CD8-positive, alpha-beta T cell (primary cell): ENCODE measurements at regions of chr4 and their contacts with region 1.

Region 1: GRCh38 chr4:87251106-87251505 is 30.7 kb upstream of the KLHL8 start:
- DNase-seq: no peak
- ATAC-seq: no peak
- H3K4me3 ChIP-seq: no peak overlapping the region
- H3K4me3 Mint-ChIP-seq: no peak overlapping the region
- H3K27ac ChIP-seq: no peak overlapping the region
- H3K27ac Mint-ChIP-seq: no peak overlapping the region
- H3K4me1 ChIP-seq: no peaks in the 10 kb centered on the region
- H3K4me1 Mint-ChIP-seq: no peaks in the 10 kb centered on the region
- H3K27me3 ChIP-seq: no peaks in the 10 kb centered on the region
- H3K27me3 Mint-ChIP-seq: no peaks in the 10 kb centered on the region
- CTCF ChIP-seq: no peak

Region 2: DNA sequence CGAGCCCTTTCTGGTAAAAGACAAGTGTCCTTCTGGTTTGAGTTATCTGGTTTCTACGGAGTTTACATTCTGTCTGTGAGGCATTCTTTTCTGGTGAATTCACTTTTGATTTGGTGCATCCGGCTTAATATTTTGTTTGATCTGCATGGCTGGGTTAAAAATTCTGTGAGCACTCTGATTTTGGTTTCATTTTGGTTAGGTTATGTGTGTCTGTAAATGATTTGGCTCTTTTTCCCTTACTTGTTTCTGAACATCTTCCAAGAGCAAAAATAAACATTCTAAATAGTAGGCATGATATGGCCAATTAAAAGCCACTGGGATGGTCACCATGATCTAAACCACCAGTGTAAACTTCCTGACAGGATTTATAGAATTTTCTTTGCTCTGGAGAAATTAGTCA is 742.7 kb before region 1 on chr4:
- CTCF ChIA-PET with region 1: no interaction called
- POLR2A ChIA-PET with region 1: no interaction called
- intact Hi-C with region 1: loop called in 1 of 2 experiments (anchors 10 kb)
- DNase-seq: no peak
- ATAC-seq: no peak
- H3K4me3 ChIP-seq: no peak overlapping the region
- H3K4me3 Mint-ChIP-seq: no peak overlapping the region
- H3K27ac ChIP-seq: no peak overlapping the region
- H3K27ac Mint-ChIP-seq: no peak overlapping the region
- H3K4me1 ChIP-seq: no peaks in the 10 kb centered on the region
- H3K4me1 Mint-ChIP-seq: no peaks in the 10 kb centered on the region
- H3K27me3 ChIP-seq: no peaks in the 10 kb centered on the region
- H3K27me3 Mint-ChIP-seq: peaks cover 3% of the 10 kb centered on the region
- CTCF ChIP-seq: no peak

Region 3: GRCh38 chr4:87152310-87153044 is 98.6 kb before region 1 on chr4:
- CTCF ChIA-PET with region 1: no interaction called
- POLR2A ChIA-PET with region 1: no interaction called
- intact Hi-C with region 1: no loop called
- DNase-seq: no peak
- ATAC-seq: no peak
- H3K4me3 ChIP-seq: no peak overlapping the region
- H3K4me3 Mint-ChIP-seq: no peak overlapping the region
- H3K27ac ChIP-seq: no peak overlapping the region
- H3K27ac Mint-ChIP-seq: no peak overlapping the region
- H3K4me1 ChIP-seq: no peaks in the 10 kb centered on the region
- H3K4me1 Mint-ChIP-seq: no peaks in the 10 kb centered on the region
- H3K27me3 ChIP-seq: no peaks in the 10 kb centered on the region
- H3K27me3 Mint-ChIP-seq: no peaks in the 10 kb centered on the region
- CTCF ChIP-seq: no peak

Region 4: GRCh38 chr4:87657525-87657924 is 406.4 kb after region 1 on chr4:
- CTCF ChIA-PET with region 1: no interaction called
- POLR2A ChIA-PET with region 1: no interaction called
- intact Hi-C with region 1: no loop called
- DNase-seq: no peak
- ATAC-seq: no peak
- H3K4me3 ChIP-seq: no peak overlapping the region
- H3K4me3 Mint-ChIP-seq: no peak overlapping the region
- H3K27ac ChIP-seq: no peak overlapping the region
- H3K27ac Mint-ChIP-seq: no peak overlapping the region
- H3K4me1 ChIP-seq: no peaks in the 10 kb centered on the region
- H3K4me1 Mint-ChIP-seq: no peaks in the 10 kb centered on the region
- H3K27me3 ChIP-seq: no peaks in the 10 kb centered on the region
- H3K27me3 Mint-ChIP-seq: peaks cover 13% of the 10 kb centered on the region
- CTCF ChIP-seq: no peak